ENCODE measurements at regions of chr5 and their contacts with region 1.

Region 1: DNA sequence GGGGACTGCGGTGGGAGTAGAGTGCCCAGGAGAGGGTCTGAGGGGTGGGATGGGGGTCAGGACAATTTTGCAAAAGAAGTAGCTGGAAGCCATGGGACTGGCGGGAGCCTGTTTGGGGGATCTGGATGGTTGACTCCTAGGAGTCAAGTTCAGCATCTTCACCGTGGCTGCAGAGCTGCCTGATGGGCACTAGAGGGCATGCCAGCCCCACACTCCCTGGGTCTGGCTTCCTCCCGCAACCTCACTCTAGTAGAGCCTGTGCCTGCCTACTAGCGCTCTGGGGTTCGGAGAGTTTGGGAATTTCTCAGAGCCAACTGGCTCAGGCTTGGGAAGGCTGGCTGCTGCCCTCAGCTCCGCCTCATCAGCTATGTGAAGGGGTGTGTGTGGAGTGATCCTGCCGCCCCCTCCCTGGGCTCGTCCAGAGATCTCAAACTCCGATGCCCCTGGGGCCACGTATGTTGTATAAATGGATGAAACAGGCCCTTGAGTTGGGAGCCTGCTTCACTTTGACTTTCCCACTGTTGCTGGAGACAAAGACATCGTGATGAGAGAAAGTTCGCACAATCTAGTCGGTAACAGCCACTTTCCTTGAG is 10.8 kb downstream of the TSPAN17 start:
- DNase-seq: no peak
- H3K4me3 ChIP-seq: no peak overlapping the region
- H3K27ac ChIP-seq: no peak overlapping the region
- H3K4me1 ChIP-seq: peaks cover 13 to 28% (median 22%) of the 10 kb centered on the region in 4 donors
- H3K27me3 ChIP-seq: peaks cover 0 to 9% (median 2%) of the 10 kb centered on the region in 4 donors
- CTCF ChIP-seq: peak; percentile 56 to 92 (median 66)
- EP300 ChIP-seq: no peak
- POLR2A ChIP-seq: no peak

Region 2: GRCh38 chr5:176959051-176959450 is 300.9 kb after region 1 on chr5:
- intact Hi-C with region 1: loop called (anchors 5 kb)
- DNase-seq: no peak
- H3K4me3 ChIP-seq: no peak overlapping the region
- H3K27ac ChIP-seq: no peak overlapping the region
- H3K4me1 ChIP-seq: peaks cover 0 to 28% (median 7%) of the 10 kb centered on the region in 4 donors
- H3K27me3 ChIP-seq: no peaks in the 10 kb centered on the region
- CTCF ChIP-seq: peak; percentile 36 to 45 (median 36)
- EP300 ChIP-seq: no peak
- POLR2A ChIP-seq: no peak